GM18951 (cell line): ENCODE measurements at regions of chr11 and their contacts with region 1.

Region 1: DNA sequence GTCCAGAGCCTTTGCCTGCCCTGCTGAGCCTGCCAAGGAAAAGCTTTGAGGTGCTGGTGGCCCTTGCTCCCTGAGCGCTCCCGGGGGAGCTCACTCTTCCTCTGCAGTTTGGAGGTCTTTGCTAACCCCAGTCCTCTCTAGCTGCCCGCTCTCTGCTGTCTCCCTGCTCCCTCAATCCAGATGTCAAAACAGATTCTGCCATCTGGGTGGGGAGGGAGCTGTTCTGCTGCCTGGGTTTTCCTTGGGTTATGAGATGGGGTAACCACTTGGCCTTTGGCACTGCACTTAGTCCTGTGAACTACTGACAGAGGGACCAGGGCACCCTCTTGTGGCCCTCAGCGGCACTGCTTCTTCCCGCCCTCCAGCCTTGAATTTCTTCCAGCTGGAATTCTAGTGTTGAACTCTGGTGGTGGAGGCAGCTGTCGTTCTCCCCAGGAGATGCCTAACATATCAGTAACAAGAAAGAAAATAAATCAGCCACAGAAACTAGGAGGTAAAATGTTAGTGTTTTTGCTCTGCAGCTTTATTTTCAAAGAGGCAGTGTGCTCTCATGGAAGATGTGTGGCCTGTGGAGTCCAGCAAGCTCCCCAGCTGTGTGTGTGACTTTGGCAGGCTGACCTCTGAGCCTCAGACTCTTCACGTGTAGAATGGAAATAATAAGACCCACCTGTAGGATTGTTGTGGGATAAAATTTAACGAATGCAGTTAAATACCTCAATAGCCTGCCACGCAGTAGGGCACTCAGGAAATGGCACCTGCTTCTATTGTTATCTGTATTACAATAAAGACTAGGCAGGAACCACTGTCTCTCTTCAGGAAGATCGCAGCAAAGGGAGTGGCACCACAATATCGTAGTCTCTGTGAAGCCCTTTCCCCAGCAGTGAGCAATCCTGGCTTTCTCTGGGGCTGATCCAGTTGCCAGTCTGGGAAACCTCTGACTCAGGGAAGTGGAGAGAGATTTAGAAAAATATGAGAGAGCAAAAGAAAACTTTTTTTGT is 23.4 kb downstream of the ARFGAP2 start:
- POLR2A ChIP-seq: no peak

Region 2: DNA sequence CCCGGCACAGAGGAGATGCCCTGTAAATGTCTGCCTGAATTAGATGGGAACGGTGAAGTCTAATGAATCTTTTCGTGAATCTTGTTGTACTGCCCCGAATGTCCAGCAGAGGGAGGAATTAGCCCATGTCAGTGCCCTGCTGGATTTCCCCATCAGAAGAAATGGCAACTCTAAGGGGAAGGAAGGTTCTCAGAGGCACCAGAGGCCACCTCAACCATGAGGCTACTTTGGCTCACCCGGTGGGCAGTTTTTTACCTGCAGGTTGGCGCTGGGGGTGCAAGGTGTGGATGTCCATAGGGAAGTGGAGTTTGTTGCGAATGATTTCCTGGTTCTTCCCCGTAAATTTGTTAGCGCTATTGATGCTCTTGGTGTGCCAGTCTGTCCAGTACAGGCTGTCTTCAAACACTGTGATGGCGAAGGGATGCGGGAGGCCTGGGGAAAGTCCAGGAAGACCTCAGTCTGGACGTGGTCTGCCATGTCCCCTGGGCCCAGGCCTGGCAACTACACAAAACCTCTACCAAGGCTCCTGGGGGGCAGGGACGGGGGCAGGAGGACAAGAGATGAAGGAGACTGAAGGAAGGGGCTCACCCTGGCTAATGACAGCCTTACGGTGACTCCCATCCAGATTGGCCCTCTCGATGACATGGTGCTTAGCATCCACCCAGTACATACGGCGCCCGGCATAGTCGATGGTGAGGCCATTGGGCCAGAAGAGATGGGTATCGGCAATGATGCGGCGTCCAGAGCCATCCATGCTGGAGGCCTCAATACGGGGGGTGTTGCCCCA is 263.4 kb before region 1 on chr11:
- in situ Hi-C with region 1: loop called (anchors 10 kb)
- POLR2A ChIP-seq: no peak

Region 3: DNA sequence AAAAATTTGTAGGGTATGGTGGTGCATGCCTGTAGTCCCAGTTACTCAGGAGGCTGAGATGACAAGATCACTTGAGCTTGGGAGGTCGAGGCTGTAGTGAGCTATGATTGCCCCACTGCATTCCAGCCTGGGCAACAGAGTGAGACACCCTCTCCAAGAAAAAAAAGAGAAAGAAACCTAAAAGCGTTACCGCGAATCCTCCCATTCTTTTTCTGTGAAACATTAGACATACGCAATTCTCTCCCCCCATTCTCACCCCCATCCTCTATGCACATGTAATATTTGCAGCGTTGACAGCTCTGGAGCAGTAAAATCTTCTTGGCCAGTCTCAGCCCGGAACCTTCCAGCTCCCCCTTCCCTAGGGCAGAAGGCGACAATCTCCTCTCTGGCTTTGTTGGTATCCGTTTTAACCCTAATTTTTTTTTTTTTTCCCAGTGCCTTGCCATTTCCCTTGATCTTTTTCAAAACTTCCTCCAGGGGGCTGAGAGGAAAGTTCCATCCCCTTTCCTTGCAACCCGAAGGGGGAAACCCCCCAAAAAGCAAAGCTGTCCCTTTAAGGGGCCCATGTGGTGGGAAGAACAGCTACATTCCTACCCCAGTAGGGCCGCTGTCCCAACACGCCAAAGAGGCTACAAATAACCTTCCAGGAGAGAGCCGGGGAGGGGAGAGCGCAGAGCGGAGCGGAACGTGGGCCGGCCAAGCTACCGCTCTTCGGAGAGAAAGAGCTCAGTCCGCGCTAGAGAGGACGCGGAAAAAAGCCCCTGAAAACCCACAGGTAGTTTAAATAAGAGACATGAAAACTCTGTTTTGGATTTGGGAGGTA is 236.8 kb before region 1 on chr11:
- in situ Hi-C with region 1: loop called (anchors 10 kb)
- POLR2A ChIP-seq: no peak

Region 4: DNA sequence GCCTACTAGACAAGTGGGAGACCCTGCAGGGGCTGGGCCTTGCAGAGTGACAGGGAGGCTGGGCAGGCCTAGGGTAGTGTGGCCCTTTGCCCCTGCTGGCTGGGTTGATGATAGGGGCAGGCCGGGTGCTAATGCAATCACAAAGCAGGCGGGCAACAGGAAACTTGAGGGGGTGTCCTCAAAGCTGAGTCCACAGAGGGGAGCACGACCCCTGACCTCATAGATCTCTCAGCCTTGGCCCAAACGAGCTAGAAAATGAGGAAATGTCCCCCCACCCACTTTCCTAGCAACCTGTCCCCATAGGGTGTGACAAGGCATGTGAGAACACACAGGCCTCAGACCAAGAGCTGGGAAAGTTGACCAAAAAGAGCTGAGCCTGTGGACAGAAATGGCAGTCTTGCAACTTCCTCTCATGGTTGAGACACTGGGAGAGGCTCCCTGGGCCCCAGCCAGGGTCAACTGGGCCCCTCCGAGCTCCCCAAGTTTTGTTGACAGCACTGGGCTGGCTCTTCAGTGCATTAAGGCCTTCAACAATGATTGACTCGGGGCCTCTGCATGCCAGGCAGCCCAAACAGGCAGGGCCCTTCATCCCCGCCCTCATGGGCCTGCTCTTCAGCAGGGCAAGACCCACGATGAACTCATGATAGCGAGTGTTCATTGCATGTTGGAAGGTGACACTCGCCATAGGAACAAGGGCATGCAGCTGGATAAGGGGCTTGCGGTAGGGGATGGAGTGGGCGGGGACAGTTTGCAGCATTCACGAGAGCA is 234.8 kb after region 1 on chr11:
- in situ Hi-C with region 1: no loop called
- POLR2A ChIP-seq: no peak

Region 5: GRCh38 chr11:47426061-47426956 is 273.1 kb after region 1 on chr11 and contains the start of gene PSMC3:
- in situ Hi-C with region 1: no loop called
- POLR2A ChIP-seq: peak; percentile 82